ENCODE measurements at regions of chr13 and their contacts with region 1.

Region 1: GRCh38 chr13:112177450-112178288 is 110.7 kb downstream of the SOX1 start:
- DNase-seq: no peak
- H3K4me3 ChIP-seq: no peak overlapping the region
- H3K27ac ChIP-seq: no peak overlapping the region
- H3K4me1 ChIP-seq: no peaks in the 10 kb centered on the region
- H3K27me3 ChIP-seq: peaks cover 0 to 33% of the 10 kb centered on the region in 2 donors
- CTCF ChIP-seq: no peak
- POLR2A ChIP-seq: no peak

Region 2: DNA sequence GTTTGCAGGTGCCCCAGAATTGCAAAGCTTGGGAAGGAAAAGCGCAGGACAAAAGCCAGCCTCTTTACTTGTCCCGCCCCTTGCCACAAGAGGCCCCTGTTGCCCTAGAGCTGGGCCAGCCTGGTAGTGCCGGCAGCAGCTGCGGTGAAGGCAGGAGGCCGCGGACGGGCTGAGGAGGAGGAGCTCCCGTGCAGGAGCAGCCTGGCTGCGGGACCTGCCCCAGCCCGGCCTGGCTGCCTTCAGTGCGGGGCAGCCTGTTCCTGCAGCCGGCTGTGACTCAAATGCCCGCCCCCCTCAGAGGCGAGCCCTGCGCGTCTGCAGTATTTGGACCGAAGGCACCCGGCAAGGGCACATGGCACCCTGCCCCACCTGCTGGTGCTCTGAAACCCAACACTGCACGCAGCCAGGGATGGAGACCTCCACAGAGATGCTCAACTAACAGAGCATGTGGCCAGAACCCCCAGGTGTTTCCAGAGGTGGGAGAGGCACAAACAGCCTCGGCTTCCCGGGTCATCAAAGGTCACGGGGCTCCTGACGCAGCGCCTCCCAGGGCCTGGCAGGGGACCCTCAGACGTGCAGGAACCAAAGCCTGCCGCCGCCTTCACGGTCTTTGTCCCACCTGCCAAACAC is 1532.7 kb before region 1 on chr13:
- intact Hi-C with region 1: loop called (anchors 10 kb)
- DNase-seq: peak; percentile 33 to 73
- H3K4me3 ChIP-seq: no peak overlapping the region
- H3K27ac ChIP-seq: no peak overlapping the region
- H3K4me1 ChIP-seq: no peaks in the 10 kb centered on the region
- H3K27me3 ChIP-seq: no peaks in the 10 kb centered on the region
- CTCF ChIP-seq: peak in 1 of 3 donors; percentile 34
- POLR2A ChIP-seq: no peak